Activated naive CD4-positive, alpha-beta T cell treated with anti-CD3 and anti-CD28 coated beads, Interleukin-2, amount 10 ng/mL, durations not matched to agents 7 days and 5 days (primary cell): ENCODE measurements at regions of chr17 and their contacts with region 1.

Region 1: GRCh38 chr17:74790161-74791054 is 14.3 kb upstream of the NAT9 start:
- DNase-seq: peak; percentile 38
- H3K4me3 Mint-ChIP-seq: peak overlapping the region; percentile 35
- H3K27ac Mint-ChIP-seq: peak overlapping the region; percentile 88
- H3K4me1 Mint-ChIP-seq: peaks cover 49% of the 10 kb centered on the region
- H3K27me3 Mint-ChIP-seq: no peaks in the 10 kb centered on the region

Region 2: GRCh38 chr17:74748529-74749365 is 41.7 kb before region 1 on chr17 and contains the start of gene NHERF1:
- CTCF ChIA-PET with region 1: interaction called, 48 read pairs
- DNase-seq: peak; percentile 95
- H3K4me3 Mint-ChIP-seq: peak within 1 kb of the TSS; percentile 99
- H3K27ac Mint-ChIP-seq: peak within 1 kb of the TSS; percentile 88
- H3K4me1 Mint-ChIP-seq: peaks cover 64% of the 10 kb centered on the region
- H3K27me3 Mint-ChIP-seq: no peaks in the 10 kb centered on the region

Region 3: DNA sequence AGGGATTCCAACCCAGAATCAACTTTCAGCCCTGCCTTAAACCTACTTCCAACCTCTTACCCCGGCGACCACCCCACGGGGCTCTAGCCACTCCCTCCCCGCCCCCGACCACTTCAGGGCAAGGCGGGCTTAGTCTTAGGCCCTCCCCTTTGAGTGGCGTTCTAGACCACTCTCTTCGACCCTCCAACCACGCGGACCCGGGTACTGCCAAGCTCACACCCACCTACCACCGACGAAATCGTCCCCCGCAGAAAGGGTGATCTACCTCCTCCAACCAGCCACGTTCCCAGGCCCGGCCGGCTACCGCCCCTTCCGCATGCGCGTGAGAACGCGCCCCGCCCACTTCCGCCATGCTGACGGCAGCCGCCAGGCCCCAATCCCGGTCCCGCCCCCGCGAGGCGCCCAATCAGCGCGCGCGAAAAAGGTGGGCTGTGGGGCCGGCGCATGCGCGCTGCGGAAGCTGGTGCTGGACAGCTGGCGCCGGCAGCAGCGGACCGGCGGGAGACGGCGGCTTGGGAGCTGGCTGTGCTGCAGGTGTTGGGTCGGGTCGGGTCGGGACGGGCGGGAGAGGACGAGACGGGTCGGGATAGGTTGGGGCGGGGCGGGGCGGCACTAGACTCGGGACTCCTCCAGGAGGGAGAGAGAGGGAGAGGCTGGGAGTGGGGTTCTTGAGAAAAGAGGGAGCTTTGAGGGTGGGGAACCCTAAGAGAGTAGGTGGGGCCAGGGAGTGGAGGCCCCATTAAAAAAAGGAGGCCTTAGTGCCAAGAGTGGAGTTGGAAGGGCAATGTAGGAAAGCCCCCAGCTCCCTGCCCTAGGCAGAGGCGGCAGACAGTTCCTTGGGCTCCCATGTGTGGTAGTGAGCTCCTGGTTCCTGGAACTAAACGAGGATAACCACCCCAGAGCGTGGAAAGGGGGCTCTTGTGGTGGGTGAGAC is 14.1 kb before region 1 on chr17 and contains the start of gene NAT9:
- CTCF ChIA-PET with region 1: interaction called, 17 read pairs
- DNase-seq: peak; percentile 99
- H3K4me3 Mint-ChIP-seq: peak within 1 kb of the TSS; percentile 98
- H3K27ac Mint-ChIP-seq: peak within 1 kb of the TSS; percentile 94
- H3K4me1 Mint-ChIP-seq: peaks cover 73% of the 10 kb centered on the region
- H3K27me3 Mint-ChIP-seq: peaks cover 4% of the 10 kb centered on the region

Region 4: DNA sequence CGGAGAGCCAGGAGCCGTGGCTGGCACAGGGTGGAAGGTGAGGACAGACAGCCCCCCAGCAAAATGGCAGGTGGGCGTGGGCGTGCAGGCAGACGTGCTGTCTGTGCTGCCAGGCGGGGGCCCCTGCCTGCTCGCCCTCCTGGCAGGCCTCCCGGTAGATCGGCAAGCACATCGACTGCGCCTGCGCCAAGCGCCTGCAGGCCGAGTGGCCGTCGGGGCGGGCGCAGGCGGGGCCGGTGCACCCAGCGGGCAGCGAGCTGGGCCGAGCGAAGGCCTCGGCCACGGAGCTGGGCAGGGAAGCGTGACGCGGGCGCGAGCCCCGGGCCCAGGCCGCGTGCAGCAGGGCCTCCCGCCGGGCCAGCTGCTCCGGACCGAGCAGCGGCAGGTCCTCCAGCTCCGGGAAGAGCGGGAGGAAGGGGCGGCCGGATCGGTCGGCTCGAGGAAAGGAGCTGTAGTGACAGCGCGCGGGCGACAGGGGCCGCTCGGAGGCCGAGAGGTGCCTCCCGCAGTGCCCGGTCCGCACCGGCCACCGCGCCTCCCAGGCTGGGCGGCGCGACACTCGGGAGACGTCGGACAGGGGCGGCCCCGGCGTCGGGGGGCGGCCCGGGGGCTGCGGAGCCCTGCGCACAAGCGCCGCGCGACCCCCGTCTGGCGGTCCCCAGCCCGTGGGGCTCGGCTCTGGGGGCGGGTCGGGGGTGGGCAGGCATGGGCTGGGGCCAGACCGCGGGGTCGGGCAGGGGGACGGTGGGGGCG is 52.4 kb after region 1 on chr17:
- CTCF ChIA-PET with region 1: interaction called, 13 read pairs
- DNase-seq: no peak
- H3K4me3 Mint-ChIP-seq: no peak overlapping the region
- H3K27ac Mint-ChIP-seq: no peak overlapping the region
- H3K4me1 Mint-ChIP-seq: peaks cover 13% of the 10 kb centered on the region
- H3K27me3 Mint-ChIP-seq: peaks cover 44% of the 10 kb centered on the region

Region 5: DNA sequence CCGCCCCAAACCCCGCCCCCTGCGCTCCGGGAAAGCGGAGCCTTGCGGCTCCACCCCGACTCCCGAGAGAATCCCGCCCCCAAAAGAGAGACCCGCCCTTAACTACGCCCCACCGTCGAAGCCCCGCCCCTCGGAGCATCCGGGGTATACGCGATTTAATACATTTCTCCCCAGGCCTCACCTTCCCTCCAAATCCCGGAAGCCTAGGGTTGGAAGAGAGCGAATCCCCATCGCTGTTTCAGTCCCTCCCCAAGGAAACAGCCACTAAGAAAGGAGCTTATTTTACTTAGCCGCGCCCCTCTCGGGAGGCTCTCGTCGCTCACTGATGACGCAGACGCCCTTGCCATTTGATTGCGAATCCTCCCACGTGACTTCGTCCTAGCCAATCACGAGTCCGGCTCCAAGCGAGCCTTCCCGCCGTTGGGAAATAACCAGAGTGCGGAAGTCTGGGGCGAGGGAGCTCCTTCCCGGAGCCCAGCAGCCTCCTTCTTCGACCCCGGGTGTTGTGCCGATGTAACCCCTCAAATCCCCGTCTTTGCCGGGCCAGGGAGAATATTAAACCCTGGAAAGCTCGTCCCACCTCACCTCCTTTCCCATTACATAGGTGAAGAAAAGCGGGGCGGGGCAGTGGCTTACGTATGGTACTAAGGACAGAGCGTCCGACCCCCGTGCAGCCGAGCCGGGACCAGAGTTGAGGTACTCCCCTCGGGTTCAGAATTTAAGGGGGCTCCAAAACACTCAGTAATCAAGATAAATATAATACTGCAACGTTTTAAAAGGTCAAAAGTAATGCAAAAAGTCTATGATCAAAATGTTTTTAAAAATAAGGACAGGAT is 82.8 kb after region 1 on chr17:
- CTCF ChIA-PET with region 1: interaction called, 26 read pairs
- DNase-seq: peak; percentile 100
- H3K4me3 Mint-ChIP-seq: peak overlapping the region; percentile 79
- H3K27ac Mint-ChIP-seq: peak overlapping the region; percentile 94
- H3K4me1 Mint-ChIP-seq: peaks cover 46% of the 10 kb centered on the region
- H3K27me3 Mint-ChIP-seq: peaks cover 5% of the 10 kb centered on the region